ENCODE measurements at regions of chr16 and their contacts with region 1.

Region 1: GRCh38 chr16:14529010-14529669 is 100.9 kb downstream of the PARN start:
- DNase-seq: peak; percentile 71 to 87
- ATAC-seq: peak; percentile 89 to 92 (median 90)
- H3K4me3 ChIP-seq: peak overlapping the region; percentile 53
- H3K27ac ChIP-seq: peak overlapping the region; percentile 87
- H3K4me1 ChIP-seq: peaks cover 26% of the 10 kb centered on the region
- H3K27me3 ChIP-seq: no peaks in the 10 kb centered on the region
- CTCF ChIP-seq: peak; percentile 79

Region 2: GRCh38 chr16:13919683-13920509 is 609.2 kb before region 1 on chr16 and contains the start of gene ERCC4:
- intact Hi-C with region 1: loop called in 1 of 2 experiments (anchors 10 kb)
- DNase-seq: peak; percentile 100
- ATAC-seq: peak; percentile 96 to 99 (median 98)
- H3K4me3 ChIP-seq: peak within 1 kb of the TSS; percentile 96
- H3K27ac ChIP-seq: peak within 1 kb of the TSS; percentile 90
- H3K4me1 ChIP-seq: peaks cover 25% of the 10 kb centered on the region
- H3K27me3 ChIP-seq: no peaks in the 10 kb centered on the region
- CTCF ChIP-seq: peak; percentile 85
- total RNA-seq, gene ERCC4: 6.8 to 10.8 (median 8.8) TPM

Region 3: GRCh38 chr16:14300705-14301168 is 228.4 kb before region 1 on chr16:
- intact Hi-C with region 1: loop called (anchors 1 to 5 kb)
- DNase-seq: peak; percentile 75 to 85
- ATAC-seq: peak; percentile 71 to 79 (median 74)
- H3K4me3 ChIP-seq: peak overlapping the region; percentile 97
- H3K27ac ChIP-seq: peak overlapping the region; percentile 91
- H3K4me1 ChIP-seq: peaks cover under 1% of the 10 kb centered on the region
- H3K27me3 ChIP-seq: no peaks in the 10 kb centered on the region
- CTCF ChIP-seq: peak; percentile 46

Region 4: DNA sequence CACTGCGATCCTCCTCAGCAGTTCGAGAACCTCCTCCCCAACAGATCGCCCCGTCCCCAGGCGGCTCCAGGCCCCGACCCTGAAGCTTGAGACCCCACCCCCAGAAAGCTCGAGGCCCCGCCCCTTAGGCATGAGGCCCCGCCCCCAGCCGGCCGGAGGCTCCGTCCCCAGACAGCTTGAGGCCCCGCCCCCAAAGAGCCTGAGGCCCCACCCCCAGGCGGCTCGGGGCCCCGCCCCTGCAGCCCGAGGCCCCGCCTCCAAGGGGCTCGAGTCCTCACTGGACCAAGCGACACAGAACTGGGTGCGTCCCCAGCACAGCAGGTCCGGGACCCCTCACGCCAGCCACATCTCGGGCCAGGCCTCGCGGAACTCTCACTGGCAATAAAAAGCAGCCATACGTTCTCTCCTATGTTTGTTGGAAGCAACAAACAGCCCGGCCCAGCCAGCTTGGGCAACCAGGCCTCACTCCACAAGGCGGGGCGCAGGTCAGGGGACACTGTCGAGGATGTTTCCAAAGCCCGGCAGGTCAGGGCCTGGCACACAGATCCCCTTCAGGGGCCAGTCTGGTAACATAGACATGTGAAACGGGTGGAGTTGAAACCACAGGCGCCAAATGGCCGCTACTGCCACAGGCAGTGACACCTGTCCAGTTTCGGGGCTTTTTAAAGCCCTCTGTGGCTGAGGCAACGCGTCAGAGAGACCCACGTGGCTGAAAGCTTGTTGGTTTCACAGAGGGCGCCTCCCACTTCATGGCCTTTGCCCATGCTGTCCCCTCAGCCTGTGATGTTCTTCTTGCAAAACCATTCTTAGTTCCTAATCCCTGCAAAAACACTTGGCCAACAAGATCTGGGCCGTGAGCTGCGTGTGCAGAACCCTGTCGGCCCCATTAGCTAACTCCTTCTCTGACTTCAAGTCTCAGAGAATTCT is 123.3 kb before region 1 on chr16:
- intact Hi-C with region 1: loop called in 1 of 2 experiments (anchors 10 kb)
- DNase-seq: peak; percentile 57 to 83
- ATAC-seq: peak; percentile 89 to 93 (median 90)
- H3K4me3 ChIP-seq: peak overlapping the region; percentile 48
- H3K27ac ChIP-seq: peak overlapping the region; percentile 90
- H3K4me1 ChIP-seq: no peaks in the 10 kb centered on the region
- H3K27me3 ChIP-seq: no peaks in the 10 kb centered on the region
- CTCF ChIP-seq: no peak

Region 5: GRCh38 chr16:14486520-14487303 is 42.4 kb before region 1 on chr16:
- intact Hi-C with region 1: loop called in 1 of 2 experiments (anchors 5 kb)
- DNase-seq: peak; percentile 76 to 86
- ATAC-seq: peak; percentile 73 to 84 (median 80)
- H3K4me3 ChIP-seq: peak overlapping the region; percentile 75
- H3K27ac ChIP-seq: peak overlapping the region; percentile 92
- H3K4me1 ChIP-seq: peaks cover 27% of the 10 kb centered on the region
- H3K27me3 ChIP-seq: no peaks in the 10 kb centered on the region
- CTCF ChIP-seq: no peak

Region 6: GRCh38 chr16:14586637-14587305 is 57.6 kb after region 1 on chr16:
- intact Hi-C with region 1: no loop called
- DNase-seq: no peak
- ATAC-seq: no peak
- H3K4me3 ChIP-seq: no peak overlapping the region
- H3K27ac ChIP-seq: no peak overlapping the region
- H3K4me1 ChIP-seq: no peaks in the 10 kb centered on the region
- H3K27me3 ChIP-seq: no peaks in the 10 kb centered on the region
- CTCF ChIP-seq: no peak

Region 7: DNA sequence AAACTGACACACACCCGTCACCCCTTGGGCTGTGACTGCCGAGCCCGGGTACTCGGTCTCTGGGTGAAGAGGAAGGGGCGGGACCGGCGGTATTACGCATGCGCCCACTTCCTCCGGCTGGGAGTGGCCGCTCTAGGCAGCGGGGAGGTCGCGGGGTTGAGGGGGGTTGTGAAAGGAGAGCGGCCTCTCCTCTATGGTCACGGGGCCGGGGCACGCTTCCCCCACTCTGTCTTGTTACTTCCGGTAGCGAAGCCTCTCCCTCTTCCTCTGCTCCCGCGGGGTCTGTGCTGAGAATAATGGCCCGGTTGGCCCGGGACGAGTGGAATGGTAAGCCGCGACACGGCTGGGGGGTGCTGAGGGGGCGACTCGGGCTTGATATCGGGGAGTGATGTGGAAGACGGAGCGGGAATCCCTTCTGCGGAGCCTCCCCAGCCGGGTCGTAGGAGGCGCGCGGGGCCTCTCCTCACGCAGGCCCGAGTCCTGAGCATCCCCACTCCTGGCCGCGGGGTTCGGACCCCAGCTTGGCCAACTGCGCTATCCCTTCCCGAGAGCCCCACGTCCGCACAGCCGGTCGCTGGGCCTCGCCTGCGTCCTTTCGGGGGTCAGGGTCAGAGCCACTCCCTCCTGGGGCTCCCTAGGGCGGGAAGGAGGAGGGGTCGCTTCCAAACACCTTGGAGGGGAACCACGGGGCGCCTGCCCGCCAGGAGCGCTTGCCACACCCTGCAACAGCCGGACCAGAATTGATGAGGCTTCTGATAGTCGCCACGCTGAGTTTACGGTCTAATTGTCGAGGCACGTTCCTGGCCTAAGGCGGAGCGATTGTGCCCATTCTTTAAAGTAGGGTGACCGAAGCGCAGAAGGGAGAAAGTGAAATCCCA is 103.8 kb after region 1 on chr16 and contains the start of gene BFAR:
- intact Hi-C with region 1: no loop called
- DNase-seq: peak; percentile 99 to 100
- ATAC-seq: peak; percentile 89 to 93 (median 90)
- H3K4me3 ChIP-seq: peak within 1 kb of the TSS; percentile 98
- H3K27ac ChIP-seq: peak within 1 kb of the TSS; percentile 95
- H3K4me1 ChIP-seq: peaks cover 59% of the 10 kb centered on the region
- H3K27me3 ChIP-seq: no peaks in the 10 kb centered on the region
- CTCF ChIP-seq: no peak
- total RNA-seq, gene BFAR: 37.5 to 62.3 (median 45.7) TPM